ENCODE measurements at regions of chr3 and their contacts with region 1.

Region 1: DNA sequence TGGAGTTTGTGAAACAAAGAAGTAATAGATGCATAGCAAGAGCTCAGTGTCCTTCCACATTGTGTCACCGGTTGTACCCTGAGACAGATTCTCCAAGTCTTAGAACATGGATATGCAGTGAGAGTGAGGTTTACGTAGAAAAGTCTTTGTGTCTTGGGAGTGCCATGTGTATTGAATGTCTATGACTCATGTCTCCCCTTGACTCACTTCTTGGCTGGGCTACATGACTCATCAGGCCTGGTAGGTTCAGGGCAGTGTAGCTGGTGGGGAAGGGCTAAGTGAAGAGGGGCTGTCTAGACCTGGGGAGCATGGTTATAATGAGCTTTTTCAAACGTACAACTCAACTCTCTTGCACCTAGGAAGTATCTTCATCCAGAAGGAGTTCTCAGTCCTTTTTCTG is 167.4 kb downstream of the GAP43 start:
- DNase-seq: peak; percentile 83
- H3K4me3 ChIP-seq: no peak overlapping the region
- H3K27ac ChIP-seq: peak overlapping the region; percentile 66
- H3K27me3 ChIP-seq: no peaks in the 10 kb centered on the region
- CTCF ChIP-seq: no peak

Region 2: DNA sequence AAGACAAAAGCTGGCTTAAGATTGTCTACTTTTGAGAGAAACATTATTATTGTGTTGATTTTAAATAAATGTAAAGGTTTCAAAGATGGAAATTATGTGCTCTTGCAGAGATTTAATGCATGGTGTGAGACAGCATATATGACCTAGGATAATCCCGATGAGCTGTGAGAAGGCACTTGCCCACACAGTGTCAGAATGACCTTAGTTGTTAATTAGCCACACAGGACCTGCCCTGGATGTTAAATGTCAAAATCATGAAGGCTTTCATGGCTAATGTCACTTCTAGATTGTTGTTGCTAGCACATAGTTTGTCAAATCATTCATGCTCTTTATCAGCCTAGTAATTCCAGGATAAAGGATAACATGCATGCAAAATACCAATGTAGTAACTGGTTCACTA is 302.8 kb before region 1 on chr3:
- CTCF ChIA-PET with region 1: no interaction called
- POLR2A ChIA-PET with region 1: no interaction called
- DNase-seq: no peak
- H3K4me3 ChIP-seq: no peak overlapping the region
- H3K27ac ChIP-seq: no peak overlapping the region
- H3K27me3 ChIP-seq: peaks cover 4% of the 10 kb centered on the region
- CTCF ChIP-seq: no peak

Region 3: GRCh38 chr3:115804722-115805121 is 14.0 kb after region 1 on chr3:
- CTCF ChIA-PET with region 1: interaction called, 34 read pairs
- POLR2A ChIA-PET with region 1: interaction called, 21 read pairs
- DNase-seq: no peak
- H3K4me3 ChIP-seq: peak overlapping the region; percentile 10; the same call in 1 of the 2 replicates
- H3K27ac ChIP-seq: peak overlapping the region; percentile 95
- H3K27me3 ChIP-seq: no peaks in the 10 kb centered on the region
- CTCF ChIP-seq: no peak

Region 4: DNA sequence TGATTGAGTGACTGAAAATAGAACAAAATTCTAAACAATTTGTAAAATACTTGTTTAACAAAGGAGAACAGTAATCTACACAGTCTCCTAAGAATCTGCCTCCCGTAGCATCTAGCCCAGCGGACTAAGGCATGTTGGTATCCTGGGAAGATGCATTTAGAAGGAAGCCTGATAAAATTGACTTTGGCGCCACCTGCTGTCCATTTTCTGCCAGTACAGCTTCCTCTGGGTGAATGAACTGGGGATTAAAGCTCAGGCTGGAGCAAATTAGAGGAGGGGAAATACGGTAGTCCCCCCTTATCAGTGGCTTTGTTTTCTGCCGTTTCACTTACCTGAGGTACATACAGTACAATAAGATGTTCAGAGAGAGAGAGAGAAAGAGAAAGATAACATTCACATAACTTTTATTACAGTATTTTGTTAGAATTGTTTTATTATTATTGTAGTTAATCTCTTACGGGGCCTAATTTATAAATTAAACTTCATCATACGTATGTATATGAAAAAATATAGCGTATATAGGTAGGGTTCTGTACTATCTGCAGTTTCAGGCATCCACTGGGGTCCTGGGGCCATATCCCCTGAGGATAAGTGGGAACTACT is 24.1 kb after region 1 on chr3:
- CTCF ChIA-PET with region 1: interaction called, 24 read pairs
- POLR2A ChIA-PET with region 1: no interaction called
- DNase-seq: no peak
- H3K4me3 ChIP-seq: no peak overlapping the region
- H3K27ac ChIP-seq: no peak overlapping the region
- H3K27me3 ChIP-seq: no peaks in the 10 kb centered on the region
- CTCF ChIP-seq: peak; percentile 91

Region 5: GRCh38 chr3:115871735-115872134 is 81.0 kb after region 1 on chr3:
- CTCF ChIA-PET with region 1: no interaction called
- POLR2A ChIA-PET with region 1: no interaction called
- DNase-seq: no peak
- H3K4me3 ChIP-seq: no peak overlapping the region
- H3K27ac ChIP-seq: no peak overlapping the region
- H3K27me3 ChIP-seq: no peaks in the 10 kb centered on the region
- CTCF ChIP-seq: no peak